ENCODE measurements at regions of chr10 and their contacts with region 1.

Region 1: GRCh38 chr10:89563861-89564478 is 28.6 kb upstream of the SLC16A12 start:
- DNase-seq: no peak
- H3K4me3 Mint-ChIP-seq: no peak overlapping the region
- H3K27ac Mint-ChIP-seq: no peak overlapping the region
- H3K4me1 Mint-ChIP-seq: no peaks in the 10 kb centered on the region
- H3K27me3 Mint-ChIP-seq: peaks cover 24% of the 10 kb centered on the region

Region 2: DNA sequence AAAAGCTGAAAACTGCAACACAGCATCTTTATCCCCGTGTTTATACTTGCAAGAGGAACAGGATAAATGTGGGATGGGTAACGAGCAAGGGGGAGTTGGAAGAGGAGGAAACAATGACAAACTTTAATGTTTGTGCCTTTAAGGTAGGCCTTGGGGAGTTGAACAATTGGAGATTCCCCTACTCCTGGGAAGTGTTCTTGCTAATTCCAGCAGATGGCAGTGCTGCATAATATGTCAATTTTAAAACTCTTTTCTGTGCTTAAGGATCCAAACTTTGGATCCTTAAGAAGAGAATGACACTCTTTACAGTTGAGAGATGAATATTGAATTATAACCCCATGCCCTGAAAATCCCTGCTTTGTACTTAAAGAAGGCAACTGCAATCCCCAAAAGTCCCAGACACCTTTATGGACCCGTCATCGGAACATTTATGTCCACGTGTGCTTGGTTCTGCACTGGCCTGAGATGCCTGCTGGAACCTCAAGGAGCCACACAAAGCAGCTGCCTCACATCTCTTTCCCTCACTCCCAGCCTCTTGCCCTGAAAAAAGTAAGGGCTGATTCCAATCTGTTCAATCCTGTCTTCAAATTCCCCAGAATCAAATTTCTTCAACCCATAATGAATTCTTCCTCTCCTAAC is 137.6 kb before region 1 on chr10:
- intact Hi-C with region 1: loop called (anchors 1 kb)
- DNase-seq: no peak
- H3K4me3 Mint-ChIP-seq: no peak overlapping the region
- H3K27ac Mint-ChIP-seq: no peak overlapping the region
- H3K4me1 Mint-ChIP-seq: no peaks in the 10 kb centered on the region
- H3K27me3 Mint-ChIP-seq: peaks cover 5% of the 10 kb centered on the region

Region 3: GRCh38 chr10:89505606-89506275 is 58.2 kb before region 1 on chr10:
- intact Hi-C with region 1: no loop called
- DNase-seq: no peak
- H3K4me3 Mint-ChIP-seq: no peak overlapping the region
- H3K27ac Mint-ChIP-seq: no peak overlapping the region
- H3K4me1 Mint-ChIP-seq: peaks cover 11% of the 10 kb centered on the region
- H3K27me3 Mint-ChIP-seq: peaks cover 7% of the 10 kb centered on the region

Region 4: GRCh38 chr10:89759531-89759930 is 195.6 kb after region 1 on chr10:
- intact Hi-C with region 1: no loop called
- DNase-seq: no peak
- H3K4me3 Mint-ChIP-seq: no peak overlapping the region
- H3K27ac Mint-ChIP-seq: no peak overlapping the region
- H3K4me1 Mint-ChIP-seq: no peaks in the 10 kb centered on the region
- H3K27me3 Mint-ChIP-seq: no peaks in the 10 kb centered on the region

Measured in activated T-helper 1 cell treated with anti-CD3 and anti-CD28 coated beads, Interleukin-12 subunit alpha, Interleukin-12 subunit beta, Interleukin-2, Interleukin-4 antibody, amounts not matched to agents 30 ng/mL and 10 ng/mL and 1 ng/mL, durations not matched to agents 14 hours and 24 hours and 36 hours (primary cell).